ENCODE measurements at regions of chr4 and their contacts with region 1.

Region 1: DNA sequence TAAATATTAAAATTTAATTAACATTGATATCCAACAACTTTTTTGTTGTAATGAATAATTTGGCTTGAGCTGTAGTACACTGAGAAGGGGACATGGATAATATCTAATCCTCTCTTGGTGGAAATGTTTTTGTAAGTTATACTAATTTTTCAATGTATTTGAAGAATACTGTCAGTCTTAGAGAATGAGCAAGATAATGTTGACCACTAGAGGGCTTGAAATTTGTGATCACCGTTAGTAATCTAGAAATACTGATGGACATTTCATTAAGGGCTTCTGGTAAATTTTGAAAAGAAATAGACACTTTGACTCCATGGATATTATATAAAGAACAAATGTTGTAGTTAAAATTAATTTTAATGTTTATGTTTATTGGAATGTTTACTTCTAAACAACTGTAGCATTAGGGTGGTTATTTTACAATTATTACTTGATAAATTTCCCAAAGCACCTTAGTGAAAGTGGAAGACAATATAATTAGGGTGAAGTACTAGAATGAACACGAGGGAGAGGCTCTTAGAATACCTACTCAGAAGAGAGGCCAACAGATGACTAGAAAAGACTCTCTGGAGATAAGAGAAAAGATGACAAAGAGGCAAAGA is 20.0 kb upstream of the CAMK2D start:
- DNase-seq: no peak
- H3K4me3 ChIP-seq: no peak overlapping the region
- CTCF ChIP-seq: no peak
- POLR2A ChIP-seq: no peak

Region 2: GRCh38 chr4:113899271-113900070 is 117.9 kb after region 1 on chr4:
- intact Hi-C with region 1: loop called (anchors 10 kb)
- DNase-seq: no peak
- H3K4me3 ChIP-seq: no peak overlapping the region
- CTCF ChIP-seq: no peak
- POLR2A ChIP-seq: no peak